Naive thymus-derived CD4-positive, alpha-beta T cell (primary cell): ENCODE measurements at regions of chr16 and their contacts with region 1.

Region 1: GRCh38 chr16:89507834-89508590 is at the start of gene SPG7:
- DNase-seq: peak; percentile 82 to 98 (median 95)
- ATAC-seq: peak; percentile 83
- H3K4me3 ChIP-seq: peak within 1 kb of the TSS; percentile 64
- H3K4me3 Mint-ChIP-seq: peak within 1 kb of the TSS; percentile 82 to 96 (median 95)
- H3K27ac ChIP-seq: peak within 1 kb of the TSS; percentile 86
- H3K27ac Mint-ChIP-seq: peak within 1 kb of the TSS; percentile 87 to 97 (median 94)
- H3K4me1 ChIP-seq: peaks cover 30 to 33% of the 10 kb centered on the region in 2 donors
- H3K4me1 Mint-ChIP-seq: peaks cover 14 to 46% (median 31%) of the 10 kb centered on the region in 7 donors
- H3K27me3 ChIP-seq: no peaks in the 10 kb centered on the region
- H3K27me3 Mint-ChIP-seq: no peaks in the 10 kb centered on the region
- total RNA-seq, gene SPG7: 129 to 181 (median 170) TPM

Region 2: DNA sequence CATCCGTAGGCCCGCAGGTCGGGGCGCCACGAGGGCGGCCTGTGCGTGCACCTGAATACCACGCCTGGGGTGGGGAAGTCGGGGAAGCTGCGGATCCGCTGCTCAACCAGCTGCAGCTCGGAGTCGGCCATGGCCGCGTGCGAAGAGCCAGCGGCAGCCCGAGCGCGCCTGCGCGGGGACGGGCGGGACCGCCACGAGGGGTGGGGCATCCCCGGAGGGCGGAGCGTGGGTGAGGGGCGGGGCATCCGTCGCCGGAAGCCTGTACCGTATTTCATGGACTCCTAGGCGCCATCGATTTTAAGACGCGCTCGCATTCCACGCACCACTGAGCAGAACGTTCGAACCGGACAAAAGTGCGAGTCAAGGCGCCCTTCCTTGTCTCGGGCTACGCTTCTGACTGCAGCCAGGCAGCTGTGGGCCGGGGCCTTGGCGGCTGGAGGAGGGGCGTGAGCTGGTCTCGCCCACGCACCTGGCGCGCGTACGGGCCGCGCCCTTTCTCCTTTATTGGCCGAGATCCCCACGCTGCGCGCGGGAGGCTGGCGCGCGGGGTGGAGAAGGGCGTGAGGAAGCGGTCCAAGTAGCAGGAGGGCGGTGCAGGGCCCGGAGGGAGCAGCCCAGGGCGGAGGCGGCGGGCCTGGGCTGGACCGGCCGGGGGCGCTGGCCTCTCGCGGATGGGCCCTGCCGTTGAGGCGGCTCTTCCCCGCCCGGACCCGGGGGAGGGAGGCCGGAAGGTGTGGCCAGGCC is 696.1 kb before region 1 on chr16 and contains the start of gene APRT:
- CTCF ChIA-PET with region 1: no interaction called
- POLR2A ChIA-PET with region 1: no interaction called
- intact Hi-C with region 1: loop called in 1 of 2 experiments (anchors 5 kb)
- DNase-seq: peak; percentile 92 to 100 (median 98)
- ATAC-seq: peak; percentile 95
- H3K4me3 ChIP-seq: peak within 1 kb of the TSS; percentile 97
- H3K4me3 Mint-ChIP-seq: peak within 1 kb of the TSS; percentile 92 to 99 (median 96)
- H3K27ac ChIP-seq: peak within 1 kb of the TSS; percentile 84
- H3K27ac Mint-ChIP-seq: peak within 1 kb of the TSS; percentile 79 to 98 (median 95)
- H3K4me1 ChIP-seq: peaks cover 8 to 11% of the 10 kb centered on the region in 2 donors
- H3K4me1 Mint-ChIP-seq: peaks cover 0 to 26% (median 12%) of the 10 kb centered on the region in 7 donors
- H3K27me3 ChIP-seq: no peaks in the 10 kb centered on the region
- H3K27me3 Mint-ChIP-seq: no peaks in the 10 kb centered on the region
- total RNA-seq, gene APRT: 134 to 178 (median 161) TPM

Region 3: DNA sequence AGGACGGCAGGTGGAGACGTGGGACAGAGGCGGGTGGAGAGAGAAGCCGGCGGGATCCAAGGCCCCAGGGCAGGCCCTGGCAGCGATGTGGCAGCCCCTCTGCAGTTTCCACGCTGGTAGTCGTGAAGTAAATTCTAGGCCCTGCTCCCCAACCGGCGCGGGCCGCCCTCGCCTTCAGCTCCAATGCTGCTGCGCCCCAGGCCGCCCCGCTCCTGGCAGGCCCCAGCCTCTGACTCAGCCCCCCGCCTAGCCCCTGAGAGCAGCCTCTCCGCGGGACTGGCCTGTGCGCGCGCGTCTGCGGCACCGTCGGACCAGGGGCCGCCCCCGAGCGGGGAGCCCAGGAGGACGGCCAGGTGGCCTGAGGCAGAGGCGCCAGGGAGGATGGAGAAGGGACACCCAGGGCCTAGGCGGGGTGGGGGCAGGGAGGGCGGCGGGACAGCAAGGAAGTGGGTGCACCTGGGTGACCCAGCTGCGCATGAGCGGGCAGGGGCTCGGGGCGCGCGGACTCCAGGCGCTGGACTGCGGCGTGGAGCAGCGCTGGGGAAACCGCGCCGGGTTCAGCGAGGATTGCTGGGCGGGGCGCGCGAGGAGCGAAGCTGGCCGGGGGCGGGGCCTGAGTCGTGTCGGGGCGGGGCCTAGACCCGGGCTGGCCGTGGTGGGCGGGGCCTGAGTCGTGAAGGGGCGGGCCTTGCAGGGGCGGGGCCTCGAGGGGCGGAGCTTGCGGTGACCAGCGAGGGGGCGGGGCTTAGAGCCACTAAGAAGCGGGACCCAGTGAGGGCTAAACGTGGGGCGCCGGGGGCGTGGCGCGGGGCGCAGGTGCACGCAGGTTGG is 260.9 kb before region 1 on chr16:
- CTCF ChIA-PET with region 1: no interaction called
- POLR2A ChIA-PET with region 1: interaction called, 4 read pairs
- intact Hi-C with region 1: loop called in 1 of 2 experiments (anchors 1 kb)
- DNase-seq: peak; percentile 85 to 99 (median 93)
- ATAC-seq: peak; percentile 99
- H3K4me3 ChIP-seq: peak overlapping the region; percentile 17
- H3K4me3 Mint-ChIP-seq: peak overlapping the region; percentile 70 to 92 (median 78)
- H3K27ac ChIP-seq: peak overlapping the region; percentile 62
- H3K27ac Mint-ChIP-seq: peak overlapping the region in 5 of 9 donors; percentile 40 to 89 (median 76)
- H3K4me1 ChIP-seq: peaks cover 0 to 5% of the 10 kb centered on the region in 2 donors
- H3K4me1 Mint-ChIP-seq: peaks cover 3 to 31% (median 21%) of the 10 kb centered on the region in 7 donors
- H3K27me3 ChIP-seq: no peaks in the 10 kb centered on the region
- H3K27me3 Mint-ChIP-seq: peaks cover 0 to 6% (median 0%) of the 10 kb centered on the region in 5 donors

Region 4: DNA sequence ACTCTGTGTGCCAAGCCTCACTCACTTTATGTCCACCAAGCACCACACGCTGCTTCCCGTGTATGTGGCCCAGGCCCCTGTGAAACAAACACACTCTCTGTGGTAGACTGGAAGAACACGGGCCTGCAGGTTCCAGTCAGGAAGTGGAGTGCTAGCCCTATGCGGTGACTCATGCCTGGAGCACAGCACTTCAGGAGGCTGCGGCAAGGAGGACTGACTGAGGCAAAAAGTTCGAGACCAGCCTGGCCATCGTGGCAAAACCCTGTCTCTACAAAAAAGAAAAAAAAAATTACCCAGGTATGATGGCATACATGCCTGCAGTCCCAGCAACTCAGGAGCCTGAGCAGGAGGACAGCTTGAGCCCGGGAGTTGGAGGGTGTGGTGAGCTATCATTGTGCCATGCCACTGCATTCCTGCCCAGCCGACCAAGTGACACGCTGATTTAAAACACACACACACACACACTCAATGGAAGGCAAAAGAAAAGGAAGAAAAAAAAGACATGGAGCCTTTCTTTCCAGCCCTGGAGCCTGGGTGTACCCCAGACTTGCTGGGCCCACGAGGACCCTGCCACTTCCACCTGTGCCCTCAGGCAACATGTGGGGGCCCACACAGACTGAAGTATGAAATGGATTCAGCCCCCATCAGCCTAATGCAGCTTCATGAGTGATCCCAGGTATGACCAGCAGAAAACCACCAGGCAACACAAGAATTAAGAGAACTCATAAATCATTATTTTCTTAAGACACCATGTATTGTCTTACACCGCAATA is 144.2 kb before region 1 on chr16:
- CTCF ChIA-PET with region 1: interaction called, 3 read pairs
- POLR2A ChIA-PET with region 1: interaction called, 6 read pairs
- intact Hi-C with region 1: loop called (anchors 1 to 5 kb)
- DNase-seq: peak in 2 of 9 donors; percentile 12 to 59
- ATAC-seq: no peak
- H3K4me3 ChIP-seq: no peak overlapping the region
- H3K4me3 Mint-ChIP-seq: peak overlapping the region; percentile 10 to 73 (median 62)
- H3K27ac ChIP-seq: peak overlapping the region; percentile 23
- H3K27ac Mint-ChIP-seq: peak overlapping the region; percentile 13 to 90 (median 77)
- H3K4me1 ChIP-seq: peaks cover 56 to 75% of the 10 kb centered on the region in 2 donors
- H3K4me1 Mint-ChIP-seq: peaks cover 65 to 99% (median 87%) of the 10 kb centered on the region in 7 donors
- H3K27me3 ChIP-seq: no peaks in the 10 kb centered on the region
- H3K27me3 Mint-ChIP-seq: no peaks in the 10 kb centered on the region

Region 5: GRCh38 chr16:89534252-89534756 is 26.3 kb after region 1 on chr16:
- CTCF ChIA-PET with region 1: interaction called, 3 read pairs
- POLR2A ChIA-PET with region 1: interaction called, 5 read pairs
- intact Hi-C with region 1: loop called in 1 of 2 experiments (anchors 1 kb)
- DNase-seq: peak in 7 of 9 donors; percentile 60 to 80 (median 74)
- ATAC-seq: peak; percentile 96
- H3K4me3 ChIP-seq: peak overlapping the region; percentile 5
- H3K4me3 Mint-ChIP-seq: peak overlapping the region; percentile 57 to 83 (median 72)
- H3K27ac ChIP-seq: peak overlapping the region; percentile 49
- H3K27ac Mint-ChIP-seq: peak overlapping the region; percentile 91 to 100 (median 94)
- H3K4me1 ChIP-seq: peaks cover 9 to 22% of the 10 kb centered on the region in 2 donors
- H3K4me1 Mint-ChIP-seq: peaks cover 17 to 27% (median 24%) of the 10 kb centered on the region in 7 donors
- H3K27me3 ChIP-seq: no peaks in the 10 kb centered on the region
- H3K27me3 Mint-ChIP-seq: no peaks in the 10 kb centered on the region

Region 6: GRCh38 chr16:89815639-89816348 is 307.8 kb after region 1 on chr16:
- CTCF ChIA-PET with region 1: no interaction called
- POLR2A ChIA-PET with region 1: no interaction called
- intact Hi-C with region 1: loop called in 1 of 2 experiments (anchors 1 kb)
- DNase-seq: no peak
- ATAC-seq: peak; percentile 14
- H3K4me3 ChIP-seq: peak overlapping the region; percentile 37
- H3K4me3 Mint-ChIP-seq: peak overlapping the region; percentile 68 to 89 (median 80)
- H3K27ac ChIP-seq: peak overlapping the region; percentile 13
- H3K27ac Mint-ChIP-seq: peak overlapping the region in 1 of 9 donors; percentile 66
- H3K4me1 ChIP-seq: peaks cover 3 to 4% of the 10 kb centered on the region in 2 donors
- H3K4me1 Mint-ChIP-seq: peaks cover 10 to 29% (median 20%) of the 10 kb centered on the region in 7 donors
- H3K27me3 ChIP-seq: no peaks in the 10 kb centered on the region
- H3K27me3 Mint-ChIP-seq: no peaks in the 10 kb centered on the region